H1 (cell line): ENCODE measurements at regions of chr12 and their contacts with region 1.

Region 1: DNA sequence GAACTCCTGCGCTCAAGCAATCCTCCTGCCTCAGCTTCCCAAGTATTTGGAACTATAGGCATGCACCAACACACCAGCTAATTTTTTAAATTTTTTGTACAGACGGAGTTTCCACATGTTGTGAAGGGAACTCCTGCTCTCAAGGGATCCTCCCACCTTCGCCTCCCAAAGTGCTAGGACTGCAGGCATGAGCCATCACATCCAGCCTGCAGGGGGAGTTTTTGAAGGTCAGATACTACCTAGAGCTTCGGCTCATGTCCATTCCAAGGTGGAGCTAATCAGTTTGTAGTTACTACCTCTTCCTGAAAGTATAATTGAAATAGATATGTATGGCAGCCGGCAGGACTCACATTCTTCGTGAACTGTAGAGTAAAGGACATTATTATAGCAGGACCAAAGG is 3.7 kb upstream of the TAS2R19 start:
- DNase-seq: peak; percentile 27 to 64
- H3K4me3 ChIP-seq: no peak overlapping the region
- H3K27ac ChIP-seq: no peak overlapping the region
- H3K4me1 ChIP-seq: no peaks in the 10 kb centered on the region
- H3K27me3 ChIP-seq: peaks cover 0 to 2% (median 0%) of the 10 kb centered on the region in 4 experiments; a peak in 1 of 7 replicates
- CTCF ChIP-seq: peak; percentile 44 to 78 (median 70)
- EP300 ChIP-seq: no peak
- POLR2A ChIP-seq: no peak
- RAD21 ChIP-seq: peak; percentile 35 to 57; a peak in 3 of 4 replicates

Region 2: GRCh38 chr12:10867381-10867780 is 158.7 kb before region 1 on chr12:
- CTCF ChIA-PET with region 1: no interaction called
- POLR2A ChIA-PET with region 1: no interaction called
- DNase-seq: no peak
- H3K4me3 ChIP-seq: no peak overlapping the region
- H3K27ac ChIP-seq: no peak overlapping the region
- H3K4me1 ChIP-seq: no peaks in the 10 kb centered on the region
- H3K27me3 ChIP-seq: no peaks in the 10 kb centered on the region
- CTCF ChIP-seq: peak in 2 of 3 experiments; percentile 9 to 26; a peak in 2 of 4 replicates
- EP300 ChIP-seq: no peak
- POLR2A ChIP-seq: no peak
- RAD21 ChIP-seq: peak; percentile 59 to 67

Region 3: DNA sequence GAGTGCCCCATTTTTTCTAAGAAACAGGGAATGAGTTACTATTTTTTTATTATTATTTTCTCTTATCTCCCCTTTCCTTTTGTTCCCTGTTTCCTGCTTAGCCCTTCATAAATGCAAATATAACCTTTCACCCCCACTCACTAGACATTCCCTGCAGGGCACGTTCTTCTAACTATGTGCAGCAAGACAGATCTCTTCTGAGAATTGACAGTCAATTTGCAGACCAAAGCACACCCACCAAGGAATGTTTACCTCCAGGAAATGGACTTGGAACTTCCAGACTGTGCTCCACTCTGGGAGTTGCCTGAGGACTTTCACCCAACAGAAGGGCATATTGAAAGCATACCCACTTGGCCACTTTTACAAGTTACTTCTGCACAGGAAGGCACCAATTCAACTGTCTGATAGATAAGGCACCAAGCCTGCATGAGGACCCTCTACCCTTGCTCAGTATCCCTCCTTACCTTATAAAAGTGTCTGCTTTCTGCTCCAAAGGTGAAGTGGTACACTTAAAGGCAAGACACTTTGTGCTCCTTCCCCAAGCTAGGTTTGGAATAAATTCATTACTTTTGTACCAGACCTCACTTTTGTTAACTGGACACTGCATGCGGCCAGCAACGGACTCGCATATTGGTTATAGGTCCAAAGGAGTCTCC is 10.2 kb before region 1 on chr12:
- CTCF ChIA-PET with region 1: interaction called, 10 read pairs
- POLR2A ChIA-PET with region 1: interaction called, 3 read pairs
- DNase-seq: no peak
- H3K4me3 ChIP-seq: no peak overlapping the region
- H3K27ac ChIP-seq: no peak overlapping the region
- H3K4me1 ChIP-seq: no peaks in the 10 kb centered on the region
- H3K27me3 ChIP-seq: no peaks in the 10 kb centered on the region
- CTCF ChIP-seq: no peak
- EP300 ChIP-seq: no peak
- POLR2A ChIP-seq: no peak
- RAD21 ChIP-seq: no peak